Calu3 (cell line): ENCODE measurements at regions of chr2 and their contacts with region 1.

Region 1: GRCh38 chr2:120343433-120344105 is 2.4 kb upstream of the INHBB start:
- DNase-seq: peak; percentile 86
- H3K4me3 Mint-ChIP-seq: peak overlapping the region; percentile 54
- H3K27ac Mint-ChIP-seq: no peak overlapping the region
- H3K4me1 Mint-ChIP-seq: peaks cover 7% of the 10 kb centered on the region
- H3K27me3 Mint-ChIP-seq: peaks cover 48% of the 10 kb centered on the region
- CTCF ChIP-seq: peak; percentile 80

Region 2: GRCh38 chr2:119759451-119760236 is 583.9 kb before region 1 on chr2 and contains the start of gene PTPN4:
- CTCF ChIA-PET with region 1: interaction called, 10 read pairs
- intact Hi-C with region 1: no loop called
- DNase-seq: peak; percentile 96
- H3K4me3 Mint-ChIP-seq: peak within 1 kb of the TSS; percentile 90
- H3K27ac Mint-ChIP-seq: peak within 1 kb of the TSS; percentile 91
- H3K4me1 Mint-ChIP-seq: peaks cover 9% of the 10 kb centered on the region
- H3K27me3 Mint-ChIP-seq: no peaks in the 10 kb centered on the region
- CTCF ChIP-seq: no peak
- total RNA-seq, gene PTPN4: 47.4 and 52.4 TPM in 2 replicates

Region 3: DNA sequence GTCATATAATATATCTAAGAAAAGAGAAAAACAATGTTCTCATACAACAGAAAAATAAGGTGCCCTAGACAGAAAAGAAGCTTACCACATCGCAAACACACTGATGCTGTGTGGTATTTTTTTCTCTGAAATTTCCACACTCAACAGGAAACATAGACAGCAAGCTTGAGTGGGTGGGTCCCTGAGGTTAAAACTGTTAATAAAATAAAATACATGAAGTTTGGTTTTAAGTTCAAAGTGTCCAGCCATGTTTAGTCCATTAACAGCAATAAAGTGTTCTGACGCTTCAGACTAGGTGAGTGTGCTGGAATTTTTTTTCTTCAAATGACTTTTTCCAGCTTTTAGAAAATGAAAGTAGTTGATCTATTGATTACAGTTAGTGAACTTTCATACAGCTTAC is 414.0 kb before region 1 on chr2:
- CTCF ChIA-PET with region 1: no interaction called
- intact Hi-C with region 1: no loop called
- DNase-seq: no peak
- H3K4me3 Mint-ChIP-seq: no peak overlapping the region
- H3K27ac Mint-ChIP-seq: no peak overlapping the region
- H3K4me1 Mint-ChIP-seq: no peaks in the 10 kb centered on the region
- H3K27me3 Mint-ChIP-seq: no peaks in the 10 kb centered on the region
- CTCF ChIP-seq: no peak

Region 4: DNA sequence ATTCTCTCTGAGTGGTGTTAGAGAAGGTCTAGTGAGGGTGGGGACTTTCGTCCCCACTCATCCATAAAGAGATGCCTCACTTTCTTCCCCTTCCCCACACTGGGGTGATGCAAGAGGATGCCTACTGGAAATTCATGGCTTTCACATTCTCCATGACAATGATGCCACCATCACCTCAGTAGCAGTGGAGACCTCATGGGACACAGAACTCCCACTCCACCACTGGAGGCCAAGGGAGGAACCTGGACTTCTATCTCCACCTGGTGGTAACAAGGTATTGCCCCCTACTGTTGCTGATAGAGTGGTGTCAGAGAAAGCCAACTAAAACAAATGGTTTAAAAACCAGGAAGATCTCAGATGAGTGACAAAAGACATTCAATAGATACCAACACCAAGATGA is 113.3 kb after region 1 on chr2:
- CTCF ChIA-PET with region 1: no interaction called
- intact Hi-C with region 1: loop called (anchors 5 kb)
- DNase-seq: peak; percentile 22
- H3K4me3 Mint-ChIP-seq: no peak overlapping the region
- H3K27ac Mint-ChIP-seq: no peak overlapping the region
- H3K4me1 Mint-ChIP-seq: peaks cover 10% of the 10 kb centered on the region
- H3K27me3 Mint-ChIP-seq: peaks cover 28% of the 10 kb centered on the region
- CTCF ChIP-seq: peak; percentile 22

Region 5: DNA sequence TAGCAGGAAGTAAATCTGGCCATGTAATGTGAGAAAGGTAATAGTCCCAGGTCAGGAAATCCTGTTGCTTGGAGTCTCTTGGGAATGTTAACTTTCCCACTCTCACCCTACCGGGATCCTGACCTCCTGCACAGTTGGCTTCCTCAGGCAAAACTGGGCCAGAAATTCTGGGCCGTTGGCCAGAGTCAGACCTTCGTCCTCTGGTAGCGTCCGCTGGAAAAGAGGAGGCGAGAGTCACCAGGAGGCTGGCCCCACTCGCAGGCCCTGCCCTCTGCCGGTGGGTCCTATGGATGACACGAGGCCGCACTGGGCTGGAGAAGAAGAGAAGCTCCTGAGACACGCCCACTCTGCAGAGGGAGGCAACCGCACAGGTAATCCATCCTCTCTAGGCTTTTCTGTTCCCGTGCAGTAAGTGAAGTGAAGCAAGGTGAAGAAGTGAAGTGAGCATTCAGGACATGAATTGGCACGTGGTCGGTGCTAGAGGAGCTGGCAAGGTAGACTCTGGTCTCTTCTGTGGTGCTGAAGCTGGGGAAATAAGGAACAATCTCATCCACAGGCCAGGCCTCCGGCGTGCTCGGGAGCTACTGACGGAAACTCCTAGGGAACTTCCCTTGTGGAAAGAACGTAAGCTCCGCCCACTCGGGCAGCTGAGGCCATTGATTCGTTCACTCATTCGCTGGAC is 209.4 kb after region 1 on chr2:
- CTCF ChIA-PET with region 1: interaction called, 11 read pairs
- intact Hi-C with region 1: no loop called
- DNase-seq: peak; percentile 91
- H3K4me3 Mint-ChIP-seq: peak overlapping the region; percentile 27
- H3K27ac Mint-ChIP-seq: no peak overlapping the region
- H3K4me1 Mint-ChIP-seq: peaks cover 11% of the 10 kb centered on the region
- H3K27me3 Mint-ChIP-seq: peaks cover 58% of the 10 kb centered on the region
- CTCF ChIP-seq: peak; percentile 63

Region 6: DNA sequence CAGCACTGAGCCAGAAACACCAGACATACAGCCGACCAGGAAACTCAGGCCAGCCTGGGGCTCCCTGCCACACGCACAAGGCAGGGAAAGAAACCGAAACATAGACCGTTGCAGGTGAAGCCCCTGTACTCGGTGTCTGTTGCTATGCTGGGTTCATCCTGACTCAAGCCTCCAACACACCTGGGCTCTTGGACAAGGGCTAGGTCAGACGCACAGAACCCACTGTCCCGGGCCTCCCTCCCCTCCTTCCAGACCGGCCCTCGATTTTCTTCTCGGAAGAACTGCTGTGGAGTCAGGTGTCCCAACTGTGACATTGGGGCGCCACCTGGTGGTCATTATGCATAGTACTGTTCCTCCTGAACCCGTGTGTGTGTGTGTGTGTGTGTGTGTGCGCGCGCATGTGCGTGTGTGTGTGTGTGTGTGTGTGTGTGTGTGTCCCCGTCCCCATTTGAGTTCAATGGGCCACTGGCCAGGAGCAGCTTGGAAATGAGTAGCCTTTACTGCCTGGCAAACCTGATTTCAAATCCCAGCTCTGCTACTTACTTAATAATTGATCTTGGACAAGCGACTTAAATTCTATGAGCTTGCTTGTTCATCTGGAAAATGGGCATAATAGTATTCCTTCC is 336.7 kb after region 1 on chr2:
- CTCF ChIA-PET with region 1: interaction called, 8 read pairs
- intact Hi-C with region 1: loop called (anchors 1 kb)
- DNase-seq: peak; percentile 84
- H3K4me3 Mint-ChIP-seq: no peak overlapping the region
- H3K27ac Mint-ChIP-seq: peak overlapping the region; percentile 63
- H3K4me1 Mint-ChIP-seq: no peaks in the 10 kb centered on the region
- H3K27me3 Mint-ChIP-seq: peaks cover 73% of the 10 kb centered on the region
- CTCF ChIP-seq: no peak